CD8-positive, alpha-beta T cell (primary cell): ENCODE measurements at regions of chr9 and their contacts with region 1.

Region 1: GRCh38 chr9:38644601-38645000 is 24.2 kb upstream of the ANKRD18A start:
- DNase-seq: no peak
- ATAC-seq: no peak
- H3K4me3 ChIP-seq: no peak overlapping the region
- H3K4me3 Mint-ChIP-seq: no peak overlapping the region
- H3K27ac ChIP-seq: no peak overlapping the region
- H3K27ac Mint-ChIP-seq: no peak overlapping the region
- H3K4me1 ChIP-seq: no peaks in the 10 kb centered on the region
- H3K4me1 Mint-ChIP-seq: no peaks in the 10 kb centered on the region
- H3K27me3 ChIP-seq: no peaks in the 10 kb centered on the region
- H3K27me3 Mint-ChIP-seq: peaks cover 7% of the 10 kb centered on the region
- CTCF ChIP-seq: no peak

Region 2: DNA sequence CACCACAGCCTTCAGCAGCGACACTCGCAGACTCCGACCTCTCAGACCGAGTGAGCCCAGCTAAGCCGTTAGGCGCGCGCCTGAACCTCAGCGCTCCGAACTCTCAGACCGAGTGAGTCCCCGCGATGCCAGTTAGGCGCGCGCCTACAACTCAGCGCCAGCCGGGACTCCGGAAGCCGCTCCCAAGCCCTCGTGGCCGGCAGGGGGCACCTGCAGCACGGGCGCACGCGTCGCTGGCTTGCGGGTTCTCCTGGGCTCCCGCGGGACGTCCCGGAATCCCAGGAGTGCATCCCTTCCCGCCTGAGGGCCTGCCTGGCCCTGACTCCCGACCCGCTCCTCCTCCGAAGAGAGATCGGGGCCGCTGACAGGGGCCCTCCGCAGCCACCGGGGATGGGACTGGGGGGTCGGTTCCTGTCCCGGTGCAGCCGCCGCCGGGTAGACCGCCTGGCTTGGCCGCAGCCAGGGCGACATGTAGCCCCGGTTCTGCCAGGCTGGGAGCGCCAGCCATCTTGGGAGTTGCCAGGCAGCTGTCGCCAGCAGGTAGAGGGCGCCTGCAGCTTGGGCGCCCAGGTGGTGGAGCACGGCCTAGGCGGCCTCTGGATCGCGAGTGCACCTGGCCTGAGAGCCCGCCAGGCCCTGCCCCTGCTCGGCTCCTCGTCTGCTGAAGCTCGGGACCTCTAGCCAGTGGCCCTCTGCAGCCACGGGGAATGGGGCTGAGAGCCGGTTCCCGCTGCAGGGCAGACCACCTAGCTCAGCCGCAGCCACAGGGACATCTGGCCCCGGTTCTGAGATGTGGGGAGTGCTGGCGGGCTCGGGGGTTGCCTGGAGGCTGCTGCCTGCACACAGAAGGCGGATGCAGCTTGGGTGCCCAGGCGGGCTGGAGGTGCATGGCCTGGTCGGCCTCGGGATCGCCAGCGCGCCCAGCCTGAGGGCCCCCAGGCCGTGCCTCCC is 23.8 kb before region 1 on chr9 and contains the start of gene ANKRD18A:
- CTCF ChIA-PET with region 1: interaction called, 6 read pairs
- POLR2A ChIA-PET with region 1: no interaction called
- intact Hi-C with region 1: loop called in 1 of 2 experiments (anchors 2 kb)
- DNase-seq: peak in 8 of 9 experiments; percentile 40 to 74 (median 56)
- ATAC-seq: peak; percentile 69
- H3K4me3 ChIP-seq: peak within 1 kb of the TSS; percentile 52 to 80
- H3K4me3 Mint-ChIP-seq: peak within 1 kb of the TSS; percentile 82
- H3K27ac ChIP-seq: peak within 1 kb of the TSS in 1 of 2 experiments; percentile 33
- H3K27ac Mint-ChIP-seq: no peak within 1 kb of the TSS
- H3K4me1 ChIP-seq: peaks cover 5% of the 10 kb centered on the region
- H3K4me1 Mint-ChIP-seq: peaks cover 9% of the 10 kb centered on the region
- H3K27me3 ChIP-seq: peaks cover 3 to 15% of the 10 kb centered on the region in 2 experiments
- H3K27me3 Mint-ChIP-seq: peaks cover 48% of the 10 kb centered on the region
- CTCF ChIP-seq: peak; percentile 33
- total RNA-seq, gene ANKRD18A: 0.90 to 1.7 TPM